AG04449 (cell line): ENCODE measurements at regions of chr6 and their contacts with region 1.

Region 1: DNA sequence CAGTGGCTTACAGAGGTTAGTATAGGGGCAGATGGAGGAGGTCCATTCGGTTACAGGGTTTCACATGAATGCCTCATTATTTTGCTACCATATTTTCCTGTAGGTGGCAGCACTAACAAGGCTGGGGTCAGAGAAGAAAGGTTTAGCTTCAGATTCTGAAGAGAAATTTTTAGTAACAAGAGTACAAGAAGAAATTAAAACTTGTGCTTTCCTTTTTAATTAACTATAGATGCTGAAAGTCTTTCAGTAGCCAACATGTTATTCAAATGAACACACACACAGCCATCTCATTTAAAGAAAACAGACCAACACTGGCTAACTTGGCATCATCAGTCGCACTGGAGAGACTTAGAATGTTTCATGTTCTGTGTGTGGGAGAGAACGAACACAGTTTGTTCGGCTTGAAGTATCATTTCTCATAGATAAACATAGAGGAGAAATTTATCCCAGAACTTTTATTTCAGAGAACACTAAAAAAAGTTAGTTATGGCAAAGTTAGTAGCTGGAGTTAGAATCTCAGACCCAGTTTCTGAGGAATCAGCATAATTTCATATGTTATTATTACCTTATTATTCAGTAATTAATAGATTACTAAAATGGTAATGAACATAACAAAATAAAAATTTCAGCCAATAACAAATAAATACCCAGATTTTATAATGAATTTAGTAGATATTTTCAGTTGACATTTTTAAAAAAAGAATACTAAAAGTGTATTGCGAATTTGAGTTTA is 314.0 kb upstream of the RSPO3 start:
- DNase-seq: no peak
- H3K4me3 ChIP-seq: no peak overlapping the region
- CTCF ChIP-seq: peak; percentile 53

Region 2: GRCh38 chr6:126672649-126673048 is 131.8 kb before region 1 on chr6:
- CTCF ChIA-PET with region 1: no interaction called
- POLR2A ChIA-PET with region 1: no interaction called
- DNase-seq: peak; percentile 28
- H3K4me3 ChIP-seq: no peak overlapping the region
- CTCF ChIP-seq: no peak

Region 3: GRCh38 chr6:126786262-126786661 is 18.2 kb before region 1 on chr6:
- CTCF ChIA-PET with region 1: interaction called, 11 read pairs
- POLR2A ChIA-PET with region 1: no interaction called
- DNase-seq: no peak
- H3K4me3 ChIP-seq: no peak overlapping the region
- CTCF ChIP-seq: no peak

Region 4: GRCh38 chr6:127100510-127101140 is 296.1 kb after region 1 on chr6:
- CTCF ChIA-PET with region 1: interaction called, 17 read pairs
- POLR2A ChIA-PET with region 1: no interaction called
- DNase-seq: no peak
- H3K4me3 ChIP-seq: no peak overlapping the region
- CTCF ChIP-seq: peak; percentile 14